Activated CD8-positive, alpha-beta T cell treated with anti-CD3 and anti-CD28 coated beads for 36 hours (primary cell): ENCODE measurements at regions of chr6 and their contacts with region 1.

Region 1: GRCh38 chr6:18503593-18504231 is 116.6 kb downstream of the RNF144B start:
- DNase-seq: peak; percentile 46
- ATAC-seq: peak; percentile 72
- H3K4me3 Mint-ChIP-seq: no peak overlapping the region
- H3K27ac Mint-ChIP-seq: no peak overlapping the region
- H3K4me1 Mint-ChIP-seq: peaks cover 2% of the 10 kb centered on the region
- H3K27me3 Mint-ChIP-seq: peaks cover 2% of the 10 kb centered on the region
- CTCF ChIP-seq: peak; percentile 84

Region 2: GRCh38 chr6:18323935-18324705 is 179.6 kb before region 1 on chr6:
- CTCF ChIA-PET with region 1: interaction called, 119 read pairs
- POLR2A ChIA-PET with region 1: no interaction called
- intact Hi-C with region 1: loop called (anchors 1 kb)
- DNase-seq: no peak
- ATAC-seq: peak; percentile 56
- H3K4me3 Mint-ChIP-seq: no peak overlapping the region
- H3K27ac Mint-ChIP-seq: no peak overlapping the region
- H3K4me1 Mint-ChIP-seq: no peaks in the 10 kb centered on the region
- H3K27me3 Mint-ChIP-seq: peaks cover 3% of the 10 kb centered on the region
- CTCF ChIP-seq: peak; percentile 78

Region 3: GRCh38 chr6:18387061-18387721 is 116.5 kb before region 1 on chr6 and contains the start of gene RNF144B:
- CTCF ChIA-PET with region 1: interaction called, 14 read pairs
- POLR2A ChIA-PET with region 1: no interaction called
- intact Hi-C with region 1: loop called (anchors 10 kb)
- DNase-seq: peak; percentile 76
- ATAC-seq: peak; percentile 95
- H3K4me3 Mint-ChIP-seq: peak within 1 kb of the TSS; percentile 88
- H3K27ac Mint-ChIP-seq: peak within 1 kb of the TSS; percentile 63
- H3K4me1 Mint-ChIP-seq: peaks cover 39% of the 10 kb centered on the region
- H3K27me3 Mint-ChIP-seq: no peaks in the 10 kb centered on the region
- CTCF ChIP-seq: no peak
- total RNA-seq, gene RNF144B: 1.8 to 1.9 TPM

Region 4: DNA sequence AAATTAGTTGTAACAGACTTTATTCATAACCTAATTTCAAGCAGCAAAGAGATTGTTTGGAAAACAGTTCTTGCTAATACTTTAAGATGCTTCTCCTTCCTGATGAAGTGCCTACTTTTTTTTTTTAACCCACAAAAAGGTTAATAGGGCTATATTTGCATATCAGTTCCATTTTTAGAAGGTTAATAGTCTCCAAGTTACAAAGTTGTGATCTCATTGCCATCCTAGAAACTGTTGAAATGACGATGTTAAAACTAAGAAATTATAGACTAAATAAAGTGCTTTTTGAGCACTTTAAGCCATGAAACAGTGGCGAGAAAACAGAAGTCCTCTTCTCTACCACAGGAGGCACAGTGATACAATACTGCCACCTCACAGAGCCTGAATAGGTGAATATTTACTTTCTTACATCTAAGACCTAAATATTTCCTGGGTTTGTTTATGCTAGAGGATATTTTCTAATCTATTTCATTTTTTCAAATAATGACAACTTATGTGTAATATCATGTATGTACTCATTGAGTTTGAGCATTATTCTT is 111.3 kb before region 1 on chr6:
- CTCF ChIA-PET with region 1: interaction called, 14 read pairs
- POLR2A ChIA-PET with region 1: no interaction called
- intact Hi-C with region 1: loop called (anchors 10 kb)
- DNase-seq: no peak
- ATAC-seq: no peak
- H3K4me3 Mint-ChIP-seq: no peak overlapping the region
- H3K27ac Mint-ChIP-seq: no peak overlapping the region
- H3K4me1 Mint-ChIP-seq: peaks cover 35% of the 10 kb centered on the region
- H3K27me3 Mint-ChIP-seq: no peaks in the 10 kb centered on the region
- CTCF ChIP-seq: no peak

Region 5: DNA sequence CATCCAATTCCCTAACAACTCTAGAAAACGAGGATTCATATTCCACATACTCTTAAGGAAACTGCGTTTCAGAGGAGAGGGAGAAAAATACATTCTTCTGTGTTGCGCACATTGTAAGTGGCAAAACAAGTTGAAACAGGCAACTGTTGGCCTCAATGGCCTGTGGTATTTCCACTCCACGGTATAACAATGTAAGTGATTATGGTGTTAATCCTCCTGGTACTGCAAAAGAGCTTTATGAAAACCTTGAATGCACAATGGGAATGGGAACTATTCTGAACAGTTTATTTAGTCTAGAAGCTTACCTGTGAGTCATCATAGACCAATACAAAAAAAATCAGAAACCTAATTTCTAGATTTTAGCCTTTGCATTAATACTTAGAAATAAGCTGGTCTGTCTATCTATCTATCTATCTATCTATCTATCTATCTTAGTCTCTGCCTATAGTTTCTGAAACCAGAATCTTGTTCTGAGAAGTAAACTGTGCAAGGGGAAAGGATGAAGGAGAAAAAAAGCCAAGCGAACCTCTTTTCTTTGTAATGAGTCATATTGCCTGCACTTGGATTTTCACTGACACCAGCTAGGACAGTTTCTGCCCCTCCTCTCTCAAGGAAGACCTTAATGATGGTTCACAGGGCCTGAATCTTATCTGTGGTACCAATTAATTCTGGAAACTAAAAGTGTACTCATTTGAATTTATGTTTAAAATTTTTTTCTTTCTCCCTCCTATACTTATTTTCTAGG is 15.0 kb before region 1 on chr6:
- CTCF ChIA-PET with region 1: interaction called, 17 read pairs
- POLR2A ChIA-PET with region 1: no interaction called
- intact Hi-C with region 1: no loop called
- DNase-seq: no peak
- ATAC-seq: no peak
- H3K4me3 Mint-ChIP-seq: no peak overlapping the region
- H3K27ac Mint-ChIP-seq: no peak overlapping the region
- H3K4me1 Mint-ChIP-seq: peaks cover 13% of the 10 kb centered on the region
- H3K27me3 Mint-ChIP-seq: peaks cover 10% of the 10 kb centered on the region
- CTCF ChIP-seq: no peak

Region 6: GRCh38 chr6:18536663-18537062 is 33.0 kb after region 1 on chr6:
- CTCF ChIA-PET with region 1: no interaction called
- POLR2A ChIA-PET with region 1: no interaction called
- intact Hi-C with region 1: no loop called
- DNase-seq: no peak
- ATAC-seq: no peak
- H3K4me3 Mint-ChIP-seq: no peak overlapping the region
- H3K27ac Mint-ChIP-seq: no peak overlapping the region
- H3K4me1 Mint-ChIP-seq: no peaks in the 10 kb centered on the region
- H3K27me3 Mint-ChIP-seq: peaks cover 29% of the 10 kb centered on the region
- CTCF ChIP-seq: no peak

Region 7: DNA sequence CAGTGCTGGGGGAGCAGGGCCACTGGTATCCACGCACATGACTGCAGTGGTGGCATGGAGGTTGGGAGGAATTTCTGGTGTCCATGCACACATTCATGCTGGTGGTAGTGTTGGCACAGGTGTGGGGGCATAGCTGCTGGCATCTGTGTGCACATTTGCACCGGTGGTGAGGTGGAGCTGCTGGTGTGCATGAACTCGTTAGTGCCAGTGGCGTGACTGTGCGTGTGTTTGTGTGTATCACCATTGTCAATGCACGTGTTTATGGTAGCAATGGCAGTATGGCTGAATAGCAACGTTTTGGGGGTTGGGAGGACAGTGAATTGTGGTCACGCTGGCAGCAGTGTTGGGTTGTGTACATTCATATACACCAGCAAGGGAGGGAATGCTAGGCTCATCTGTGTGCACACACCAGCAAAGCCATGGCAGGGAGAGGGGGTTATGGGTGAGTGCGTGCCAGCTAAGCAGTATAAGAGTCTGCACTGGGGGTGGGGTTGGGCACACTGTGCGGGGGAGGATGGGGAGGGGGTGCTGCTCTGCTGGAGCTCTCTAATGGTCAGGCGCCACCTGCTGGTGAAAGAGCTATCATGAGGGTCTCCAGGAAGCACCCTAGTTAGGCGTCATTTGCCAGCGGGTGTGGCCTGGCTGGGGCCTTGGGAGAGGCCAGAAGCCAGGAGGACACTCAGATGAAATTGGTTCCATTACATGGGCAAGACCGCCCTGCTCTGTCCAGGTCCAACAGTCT is 707.3 kb after region 1 on chr6:
- CTCF ChIA-PET with region 1: no interaction called
- POLR2A ChIA-PET with region 1: no interaction called
- intact Hi-C with region 1: no loop called
- DNase-seq: peak; percentile 42
- ATAC-seq: no peak
- H3K4me3 Mint-ChIP-seq: no peak overlapping the region
- H3K27ac Mint-ChIP-seq: no peak overlapping the region
- H3K4me1 Mint-ChIP-seq: no peaks in the 10 kb centered on the region
- H3K27me3 Mint-ChIP-seq: no peaks in the 10 kb centered on the region
- CTCF ChIP-seq: no peak